IMR-90 (cell line): ENCODE measurements at regions of chr15 and their contacts with region 1.

Region 1: DNA sequence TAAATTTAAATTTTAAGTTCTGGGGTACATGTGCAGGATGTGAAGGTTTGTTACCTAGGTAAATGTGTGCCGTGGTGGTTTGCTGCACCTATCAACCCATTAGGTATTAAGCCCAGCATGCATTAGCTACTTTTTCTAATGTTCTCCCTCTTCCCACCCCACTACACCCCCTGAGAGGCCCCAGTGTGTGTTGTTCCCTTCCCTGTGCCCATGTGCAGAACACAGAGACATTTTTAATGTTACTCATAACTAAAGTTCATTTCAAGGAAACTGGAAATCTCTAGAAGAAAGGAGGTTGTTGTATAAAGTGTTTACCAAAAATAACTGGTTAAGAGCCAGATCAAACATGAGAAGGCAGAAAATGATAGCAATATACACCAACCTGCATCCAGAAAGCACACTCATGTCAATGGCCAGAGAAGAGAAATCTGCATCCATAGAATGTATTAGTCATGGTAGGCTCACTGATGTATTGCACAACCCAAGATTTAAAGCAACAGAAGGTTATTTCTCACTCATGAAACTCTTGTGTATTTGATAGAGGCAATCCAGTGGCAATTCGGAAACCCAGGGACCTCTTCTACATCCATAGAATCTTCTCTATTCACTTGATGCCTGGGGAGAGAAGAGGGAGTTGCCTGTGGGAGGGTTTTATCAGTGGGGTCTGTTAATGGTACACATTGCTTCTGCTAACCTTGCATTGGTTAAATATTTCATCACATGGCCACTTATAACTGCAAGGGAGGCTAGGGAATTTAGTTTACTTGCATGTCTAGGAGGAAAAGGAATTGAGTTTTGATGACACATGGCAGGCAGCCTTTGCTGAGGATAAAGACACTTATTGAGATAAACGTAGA is 321.9 kb upstream of the RASGRP1 start:
- DNase-seq: peak; percentile 93
- ATAC-seq: peak; percentile 70
- H3K4me3 ChIP-seq: peak overlapping the region; percentile 39
- H3K27ac ChIP-seq: peak overlapping the region; percentile 97
- H3K4me1 ChIP-seq: peaks cover 22% of the 10 kb centered on the region
- H3K27me3 ChIP-seq: no peaks in the 10 kb centered on the region
- CTCF ChIP-seq: no peak
- POLR2A ChIP-seq: no peak; the same call in 1 of the 2 replicates
- RAD21 ChIP-seq: 0 out of 2 replicates have a peak, but pooled peaks have one; percentile 9

Region 2: DNA sequence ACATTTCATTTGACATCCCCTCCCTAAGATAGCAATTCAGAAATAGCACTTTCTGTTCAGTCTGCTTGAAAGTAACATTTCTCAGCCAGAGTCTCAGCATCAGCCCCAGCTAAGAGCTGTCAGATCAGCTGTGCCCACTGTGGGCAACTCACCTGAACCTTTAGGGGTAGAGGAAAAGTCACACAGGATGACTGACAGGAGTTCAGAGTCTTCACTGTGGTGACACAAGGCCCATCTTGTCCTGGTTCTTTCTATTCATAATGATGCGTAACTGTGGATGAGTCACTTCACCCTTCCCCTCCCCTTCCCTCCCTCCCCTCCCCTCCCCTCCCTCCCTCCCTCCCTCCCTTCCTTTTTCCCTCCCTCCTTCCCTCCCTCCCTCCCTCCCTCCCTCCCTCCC is 225.8 kb before region 1 on chr15:
- CTCF ChIA-PET with region 1: no interaction called
- POLR2A ChIA-PET with region 1: no interaction called
- dilution Hi-C with region 1: no loop called
- in situ Hi-C with region 1: no loop called
- intact Hi-C with region 1: no loop called
- DNase-seq: no peak
- ATAC-seq: no peak
- H3K4me3 ChIP-seq: no peak overlapping the region
- H3K27ac ChIP-seq: no peak overlapping the region
- H3K4me1 ChIP-seq: no peaks in the 10 kb centered on the region
- H3K27me3 ChIP-seq: peaks cover 42% of the 10 kb centered on the region
- CTCF ChIP-seq: no peak
- POLR2A ChIP-seq: no peak
- RAD21 ChIP-seq: no peak

Region 3: GRCh38 chr15:38920966-38921365 is 34.4 kb after region 1 on chr15:
- CTCF ChIA-PET with region 1: no interaction called
- POLR2A ChIA-PET with region 1: no interaction called
- dilution Hi-C with region 1: no loop called
- in situ Hi-C with region 1: no loop called
- intact Hi-C with region 1: no loop called
- DNase-seq: no peak
- ATAC-seq: no peak
- H3K4me3 ChIP-seq: no peak overlapping the region
- H3K27ac ChIP-seq: no peak overlapping the region
- H3K4me1 ChIP-seq: no peaks in the 10 kb centered on the region
- H3K27me3 ChIP-seq: no peaks in the 10 kb centered on the region
- CTCF ChIP-seq: no peak
- POLR2A ChIP-seq: no peak
- RAD21 ChIP-seq: no peak

Region 4: DNA sequence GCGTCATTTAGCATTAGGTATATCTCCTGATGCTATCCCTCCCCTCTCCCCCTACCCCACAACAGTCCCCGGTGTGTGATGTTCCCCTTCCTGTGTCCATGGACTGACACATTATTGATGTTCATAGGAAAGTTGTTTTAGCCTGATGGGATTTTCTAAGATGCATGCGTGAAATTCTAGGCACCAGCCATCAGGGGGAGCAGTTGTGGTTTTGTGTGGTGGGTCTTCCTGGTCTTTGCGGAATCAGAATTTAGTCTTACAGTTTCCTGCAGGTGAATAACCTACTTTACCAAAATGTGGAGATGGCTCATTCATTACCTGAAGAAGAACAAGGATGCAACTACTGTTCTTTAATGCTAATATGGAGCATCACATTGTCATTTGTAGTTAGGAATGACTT is 239.4 kb after region 1 on chr15:
- CTCF ChIA-PET with region 1: no interaction called
- POLR2A ChIA-PET with region 1: interaction called, 19 read pairs
- dilution Hi-C with region 1: no loop called
- in situ Hi-C with region 1: no loop called
- intact Hi-C with region 1: no loop called
- DNase-seq: peak; percentile 68
- ATAC-seq: no peak
- H3K4me3 ChIP-seq: no peak overlapping the region
- H3K27ac ChIP-seq: peak overlapping the region; percentile 39; the same call in 1 of the 2 replicates
- H3K4me1 ChIP-seq: peaks cover 37% of the 10 kb centered on the region
- H3K27me3 ChIP-seq: no peaks in the 10 kb centered on the region
- CTCF ChIP-seq: peak; percentile 64
- POLR2A ChIP-seq: no peak
- RAD21 ChIP-seq: peak; percentile 62